Endothelial cell of umbilical vein (primary cell): ENCODE measurements at regions of chr16 and their contacts with region 1.

Region 1: GRCh38 chr16:66516808-66517585 is 32.9 kb downstream of the TK2 start:
- DNase-seq: peak; percentile 100
- H3K4me3 ChIP-seq: peak overlapping the region in 1 of 3 experiments; percentile 0
- H3K27ac ChIP-seq: peak overlapping the region; percentile 97
- H3K4me1 ChIP-seq: peaks cover 81% of the 10 kb centered on the region
- H3K27me3 ChIP-seq: no peaks in the 10 kb centered on the region
- CTCF ChIP-seq: no peak
- POLR2A ChIP-seq: peak; percentile 83

Region 2: GRCh38 chr16:66357153-66357928 is 159.7 kb before region 1 on chr16:
- CTCF ChIA-PET with region 1: interaction called, 3 read pairs
- POLR2A ChIA-PET with region 1: no interaction called
- dilution Hi-C with region 1: no loop called
- intact Hi-C with region 1: loop called (anchors 1 kb)
- DNase-seq: peak; percentile 93
- H3K4me3 ChIP-seq: no peak overlapping the region
- H3K27ac ChIP-seq: peak overlapping the region; percentile 99
- H3K4me1 ChIP-seq: peaks cover 51% of the 10 kb centered on the region
- H3K27me3 ChIP-seq: no peaks in the 10 kb centered on the region
- CTCF ChIP-seq: peak; percentile 74 to 84
- POLR2A ChIP-seq: no peak

Region 3: DNA sequence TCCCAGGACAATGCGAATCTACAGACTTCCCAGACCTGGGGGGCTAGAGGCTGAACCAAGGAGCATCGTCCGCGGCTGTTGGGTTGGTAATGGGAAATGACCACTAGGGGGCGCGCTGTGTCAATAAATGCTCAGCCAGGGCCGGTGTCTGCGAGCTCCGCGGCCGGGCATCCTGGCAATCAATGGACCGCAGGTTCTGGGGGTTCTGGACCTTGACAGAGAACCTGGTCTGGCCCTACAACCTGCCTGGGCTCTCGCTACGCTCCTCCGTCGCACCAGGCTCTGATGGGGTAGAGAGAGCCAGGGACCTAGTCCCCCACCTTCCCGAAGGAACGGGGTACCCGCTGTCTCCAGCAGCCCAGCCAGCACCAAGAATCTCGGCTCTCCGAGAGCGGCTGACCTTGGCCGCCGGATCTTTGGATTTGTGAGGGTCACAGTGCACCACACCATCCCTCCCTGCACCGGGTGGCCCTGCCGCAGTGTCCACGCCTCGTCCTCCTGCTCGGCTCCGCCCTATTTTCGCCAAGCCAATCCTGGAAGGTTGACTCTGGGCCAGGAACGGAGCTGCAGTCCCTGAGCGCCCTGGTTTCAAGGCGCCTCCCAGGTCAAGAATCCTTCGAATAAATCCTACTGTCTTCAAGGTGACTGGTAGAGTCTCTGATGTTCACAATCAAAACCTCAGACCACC is 110.3 kb before region 1 on chr16:
- CTCF ChIA-PET with region 1: interaction called, 56 read pairs
- POLR2A ChIA-PET with region 1: no interaction called
- dilution Hi-C with region 1: no loop called
- intact Hi-C with region 1: loop called (anchors 1 kb)
- DNase-seq: peak; percentile 75
- H3K4me3 ChIP-seq: peak overlapping the region in 2 of 3 experiments; percentile 12 to 31
- H3K27ac ChIP-seq: peak overlapping the region; percentile 27
- H3K4me1 ChIP-seq: peaks cover 34% of the 10 kb centered on the region
- H3K27me3 ChIP-seq: no peaks in the 10 kb centered on the region
- CTCF ChIP-seq: peak; percentile 81
- POLR2A ChIP-seq: peak; percentile 76

Region 4: DNA sequence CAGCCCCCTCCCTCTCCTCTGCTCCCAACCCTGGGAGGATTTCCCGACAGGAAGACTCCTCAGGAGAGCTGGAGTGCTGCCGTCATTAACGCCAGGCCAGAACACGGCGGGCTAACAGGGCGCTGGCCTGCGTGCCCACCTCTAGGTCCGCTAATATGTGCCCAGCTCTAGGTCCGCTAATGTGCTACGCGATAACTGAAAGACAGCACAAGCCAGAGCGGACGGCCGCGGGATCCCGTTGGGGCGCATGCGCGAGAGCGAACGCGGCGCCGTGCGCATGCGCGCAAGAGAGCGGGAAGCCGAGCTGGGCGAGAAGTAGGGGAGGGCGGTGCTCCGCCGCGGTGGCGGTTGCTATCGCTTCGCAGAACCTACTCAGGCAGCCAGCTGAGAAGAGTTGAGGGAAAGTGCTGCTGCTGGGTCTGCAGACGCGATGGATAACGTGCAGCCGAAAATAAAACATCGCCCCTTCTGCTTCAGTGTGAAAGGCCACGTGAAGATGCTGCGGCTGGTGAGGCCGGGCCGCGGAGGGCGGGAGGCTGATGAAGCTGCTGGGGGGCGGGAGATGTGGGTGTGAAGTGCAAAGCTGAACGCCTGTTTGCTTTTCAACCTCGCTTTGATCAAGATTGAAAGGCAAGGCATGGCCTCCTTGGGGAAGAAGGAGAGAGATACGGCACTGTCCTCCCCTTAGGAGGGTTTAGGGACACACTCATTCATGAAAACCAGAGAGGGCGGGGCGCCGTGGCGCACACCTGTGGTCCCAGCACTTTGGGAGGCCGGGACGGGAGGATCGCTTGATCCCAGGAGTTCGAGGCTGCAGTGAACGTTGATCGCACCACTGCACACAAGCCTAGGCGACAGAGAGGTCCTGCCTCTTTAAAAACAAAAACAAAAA is 35.5 kb after region 1 on chr16 and contains the start of gene CKLF:
- CTCF ChIA-PET with region 1: interaction called, 7 read pairs
- POLR2A ChIA-PET with region 1: interaction called, 4 read pairs
- dilution Hi-C with region 1: no loop called
- intact Hi-C with region 1: loop called (anchors 1 kb)
- DNase-seq: peak; percentile 96
- H3K4me3 ChIP-seq: peak within 1 kb of the TSS; percentile 13 to 65 (median 57)
- H3K27ac ChIP-seq: peak within 1 kb of the TSS; percentile 65
- H3K4me1 ChIP-seq: peaks cover 32% of the 10 kb centered on the region
- H3K27me3 ChIP-seq: no peaks in the 10 kb centered on the region
- CTCF ChIP-seq: no peak
- POLR2A ChIP-seq: peak; percentile 83
- total RNA-seq, gene CKLF: 80.0 and 93.4 TPM in 2 replicates

Region 5: GRCh38 chr16:66588981-66589713 is 72.2 kb after region 1 on chr16:
- CTCF ChIA-PET with region 1: interaction called, 9 read pairs
- POLR2A ChIA-PET with region 1: no interaction called
- dilution Hi-C with region 1: no loop called
- intact Hi-C with region 1: loop called (anchors 5 kb)
- DNase-seq: peak; percentile 45
- H3K4me3 ChIP-seq: no peak overlapping the region
- H3K27ac ChIP-seq: no peak overlapping the region
- H3K4me1 ChIP-seq: peaks cover 7% of the 10 kb centered on the region
- H3K27me3 ChIP-seq: no peaks in the 10 kb centered on the region
- CTCF ChIP-seq: peak; percentile 62 to 76
- POLR2A ChIP-seq: no peak

Region 6: DNA sequence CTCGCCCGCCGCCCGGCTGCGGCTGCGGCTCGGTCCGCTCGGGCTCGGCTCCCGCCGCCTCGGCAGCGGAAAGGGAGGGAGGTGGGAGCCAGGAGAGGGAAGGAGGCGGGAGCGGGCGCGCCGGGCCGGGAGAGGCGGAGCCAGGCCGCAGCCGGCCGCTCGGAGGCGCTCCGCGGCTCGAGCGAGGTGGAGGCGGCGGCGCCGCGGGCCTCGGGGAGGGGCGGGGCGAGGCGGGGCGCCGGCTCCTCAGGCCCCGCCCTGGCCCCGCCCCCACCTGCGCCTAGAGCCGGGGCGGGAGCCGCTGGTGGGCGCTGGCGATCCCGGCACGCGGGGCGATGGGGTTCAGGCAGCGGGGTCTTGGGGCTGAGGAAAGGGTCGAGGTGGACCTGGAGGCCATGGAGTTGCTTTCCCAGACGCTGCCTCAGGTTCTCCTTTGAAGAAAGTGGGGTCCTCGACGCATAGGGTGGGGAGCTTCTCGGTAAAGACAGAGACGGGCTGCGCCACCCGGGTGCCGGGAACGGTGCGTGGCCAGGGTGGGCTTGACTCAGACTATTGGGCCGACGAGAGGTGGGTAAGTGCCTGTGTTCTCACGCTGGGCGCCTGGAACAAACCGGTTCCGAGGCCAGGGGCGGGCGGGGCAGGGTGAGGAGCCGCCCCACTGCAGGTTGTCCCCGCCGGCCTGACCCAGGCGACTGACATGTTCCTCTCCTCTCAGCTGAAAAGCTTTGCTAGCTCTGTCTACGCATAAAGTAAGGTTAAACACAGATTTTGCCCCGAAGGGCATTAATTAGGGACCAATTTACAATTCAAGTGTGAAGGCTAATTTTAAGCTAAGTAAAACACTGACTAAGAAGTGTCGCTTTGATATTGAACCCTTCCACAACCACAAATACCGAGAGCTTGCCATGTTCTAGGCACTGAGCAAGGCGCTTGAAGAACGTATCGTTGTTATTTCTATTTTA is 180.0 kb after region 1 on chr16 and contains the start of gene CMTM4:
- CTCF ChIA-PET with region 1: no interaction called
- POLR2A ChIA-PET with region 1: no interaction called
- dilution Hi-C with region 1: no loop called
- intact Hi-C with region 1: no loop called
- DNase-seq: peak; percentile 86
- H3K4me3 ChIP-seq: peak within 1 kb of the TSS; percentile 40 to 60 (median 53)
- H3K27ac ChIP-seq: no peak within 1 kb of the TSS
- H3K4me1 ChIP-seq: peaks cover 8% of the 10 kb centered on the region
- H3K27me3 ChIP-seq: peaks cover 2% of the 10 kb centered on the region in 2 experiments
- CTCF ChIP-seq: peak; percentile 4 to 8
- POLR2A ChIP-seq: peak; percentile 34
- total RNA-seq, gene CMTM4: 8.5 and 9.0 TPM in 2 replicates

Region 7: DNA sequence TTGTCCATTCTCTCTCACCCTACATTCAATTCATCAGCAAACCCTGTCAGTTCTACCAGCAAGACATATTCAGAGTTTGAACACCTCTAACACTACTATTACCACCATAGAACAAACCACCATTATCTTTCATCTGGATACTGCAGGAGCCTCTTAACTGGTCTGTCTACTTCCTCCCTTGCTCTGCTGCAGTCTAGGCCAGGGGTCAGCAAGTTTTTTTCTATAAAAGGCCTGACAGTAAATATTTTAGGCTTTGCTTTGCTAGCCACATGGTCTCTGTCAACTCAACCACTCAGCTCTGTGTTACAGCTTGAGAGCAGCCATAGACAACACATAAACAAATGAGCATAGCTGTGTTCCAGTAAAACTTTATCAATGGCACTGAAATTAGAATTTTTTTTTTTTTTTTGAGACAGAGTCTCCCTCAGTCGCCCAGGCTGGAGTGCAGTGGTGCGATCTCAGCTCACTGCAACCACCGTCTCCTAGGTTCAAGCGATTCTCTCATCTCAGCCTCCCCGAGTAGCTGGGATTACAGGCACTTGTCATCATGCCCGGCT is 795.8 kb after region 1 on chr16:
- CTCF ChIA-PET with region 1: no interaction called
- POLR2A ChIA-PET with region 1: no interaction called
- dilution Hi-C with region 1: no loop called
- intact Hi-C with region 1: no loop called
- DNase-seq: no peak
- H3K4me3 ChIP-seq: no peak overlapping the region
- H3K27ac ChIP-seq: peak overlapping the region; percentile 72
- H3K4me1 ChIP-seq: peaks cover 12% of the 10 kb centered on the region
- H3K27me3 ChIP-seq: no peaks in the 10 kb centered on the region
- CTCF ChIP-seq: no peak
- POLR2A ChIP-seq: no peak